Head of caudate nucleus (tissue), 42 donors: ENCODE measurements at regions of chr1 and their contacts with region 1.

Region 1: GRCh38 chr1:50735443-50735842 is 224.6 kb downstream of the FAF1 start:
- DNase-seq: no peak

Region 2: GRCh38 chr1:50368179-50369012 is 367.0 kb before region 1 on chr1:
- intact Hi-C with region 1: loop called (anchors 5 kb)
- DNase-seq: peak; percentile 19 to 83 (median 56)

Region 3: GRCh38 chr1:50693834-50694233 is 41.6 kb before region 1 on chr1:
- intact Hi-C with region 1: no loop called
- DNase-seq: no peak

Region 4: DNA sequence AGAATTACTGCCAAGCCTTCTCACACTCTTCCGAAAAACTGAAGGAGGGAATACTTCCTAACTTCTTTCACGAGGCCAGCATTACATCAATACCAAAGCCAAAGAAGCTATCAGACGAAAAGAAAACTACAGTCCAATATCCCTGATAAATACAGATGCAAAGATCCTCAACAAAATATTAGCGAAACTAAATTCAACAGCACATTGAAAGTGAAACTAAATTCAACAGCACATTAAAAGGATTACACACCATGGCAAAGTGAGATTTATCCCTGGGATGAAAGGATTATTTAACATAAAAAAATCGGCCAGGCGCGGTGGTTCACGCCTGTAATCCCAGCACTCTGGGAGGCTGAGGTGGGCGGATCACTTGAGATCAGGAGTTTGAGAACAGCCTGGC is 47.8 kb after region 1 on chr1:
- intact Hi-C with region 1: no loop called
- DNase-seq: no peak

Region 5: GRCh38 chr1:50793521-50793920 is 58.1 kb after region 1 on chr1:
- intact Hi-C with region 1: no loop called
- DNase-seq: no peak